Left ventricle myocardium inferior (tissue), 1 donor: ENCODE measurements at regions of chr6 and their contacts with region 1.

Region 1: DNA sequence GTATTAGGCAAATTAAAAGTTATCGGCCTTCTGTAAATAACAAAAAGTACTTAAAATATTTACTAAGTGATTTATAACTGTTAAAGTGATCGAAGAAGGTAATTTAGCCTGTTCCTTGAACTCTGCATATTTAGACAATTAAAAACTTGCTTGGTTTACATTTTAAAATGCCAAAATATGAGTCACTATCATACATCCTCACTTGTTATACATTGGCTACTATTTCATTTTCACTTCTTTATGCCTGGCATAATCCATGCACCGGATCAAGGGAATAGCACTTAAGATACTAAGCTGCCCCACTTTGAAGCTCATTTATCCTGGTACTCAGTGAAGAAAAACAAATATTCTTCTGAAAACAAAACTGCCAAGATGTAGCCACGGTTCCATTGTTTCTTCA is 344.6 kb downstream of the UBE3D start:
- DNase-seq: no peak
- H3K4me3 ChIP-seq: no peak overlapping the region
- H3K27ac ChIP-seq: no peak overlapping the region
- H3K4me1 ChIP-seq: no peaks in the 10 kb centered on the region
- H3K27me3 ChIP-seq: no peaks in the 10 kb centered on the region
- CTCF ChIP-seq: no peak

Region 2: GRCh38 chr6:82298012-82298411 is 423.0 kb before region 1 on chr6:
- intact Hi-C with region 1: loop called (anchors 10 kb)
- DNase-seq: no peak
- H3K4me3 ChIP-seq: no peak overlapping the region
- H3K27ac ChIP-seq: no peak overlapping the region
- H3K4me1 ChIP-seq: no peaks in the 10 kb centered on the region
- H3K27me3 ChIP-seq: peaks cover 5% of the 10 kb centered on the region
- CTCF ChIP-seq: no peak